ENCODE measurements at regions of chrX and their contacts with region 1.

Region 1: DNA sequence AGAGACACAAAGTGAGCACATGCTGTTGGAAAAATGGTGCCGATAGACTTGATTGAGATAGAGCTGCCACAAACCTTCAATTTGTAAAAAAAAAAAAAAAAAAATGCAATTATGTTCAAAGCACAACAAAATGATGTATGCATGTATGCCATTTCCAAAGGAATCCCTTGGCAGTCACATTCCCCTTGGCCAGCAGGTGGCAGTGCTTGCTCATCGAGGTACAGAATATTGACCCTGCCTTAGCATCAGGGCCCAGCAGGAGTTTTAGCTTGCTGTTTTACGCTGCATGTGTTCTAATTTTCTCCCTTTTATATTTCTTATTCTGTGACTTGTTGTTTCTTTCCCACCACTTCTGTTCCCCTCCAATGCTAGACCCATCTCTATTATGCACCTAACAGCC is 34.5 kb upstream of the CYBB start:
- DNase-seq: peak; percentile 86
- H3K4me3 Mint-ChIP-seq: no peak overlapping the region
- H3K27ac Mint-ChIP-seq: peak overlapping the region; percentile 66
- H3K4me1 Mint-ChIP-seq: peaks cover 15% of the 10 kb centered on the region
- H3K27me3 Mint-ChIP-seq: no peaks in the 10 kb centered on the region

Region 2: DNA sequence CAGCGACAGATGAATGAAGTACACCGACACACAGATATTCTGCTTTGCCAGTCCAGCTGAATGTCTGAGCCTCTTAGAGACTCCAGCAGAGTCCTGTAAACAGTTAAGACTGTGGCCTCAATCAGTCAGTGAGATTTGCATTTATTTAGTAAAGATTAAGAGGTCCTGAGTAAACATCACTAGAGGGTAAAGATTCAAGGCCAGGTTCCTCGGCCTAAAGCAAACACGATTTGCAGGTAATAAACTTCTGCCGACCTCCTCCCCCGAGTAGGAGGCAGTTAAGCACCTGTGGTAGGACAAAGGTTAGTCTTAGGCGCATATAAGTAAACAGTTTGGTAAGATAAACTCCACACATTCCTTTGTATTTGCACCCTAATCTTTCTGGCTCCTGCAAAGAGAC is 1726.2 kb before region 1 on chrX:
- CTCF ChIA-PET with region 1: no interaction called
- intact Hi-C with region 1: no loop called
- DNase-seq: no peak
- H3K4me3 Mint-ChIP-seq: no peak overlapping the region
- H3K27ac Mint-ChIP-seq: no peak overlapping the region
- H3K4me1 Mint-ChIP-seq: no peaks in the 10 kb centered on the region
- H3K27me3 Mint-ChIP-seq: no peaks in the 10 kb centered on the region

Region 3: GRCh38 chrX:37763400-37763799 is 18.0 kb after region 1 on chrX:
- CTCF ChIA-PET with region 1: interaction called, 12 read pairs
- intact Hi-C with region 1: no loop called
- DNase-seq: no peak
- H3K4me3 Mint-ChIP-seq: no peak overlapping the region
- H3K27ac Mint-ChIP-seq: no peak overlapping the region
- H3K4me1 Mint-ChIP-seq: peaks cover 8% of the 10 kb centered on the region
- H3K27me3 Mint-ChIP-seq: no peaks in the 10 kb centered on the region

Region 4: GRCh38 chrX:37787423-37787869 is 42.1 kb after region 1 on chrX:
- CTCF ChIA-PET with region 1: interaction called, 4 read pairs
- intact Hi-C with region 1: loop called (anchors 2 kb)
- DNase-seq: no peak
- H3K4me3 Mint-ChIP-seq: no peak overlapping the region
- H3K27ac Mint-ChIP-seq: no peak overlapping the region
- H3K4me1 Mint-ChIP-seq: peaks cover 21% of the 10 kb centered on the region
- H3K27me3 Mint-ChIP-seq: no peaks in the 10 kb centered on the region

Region 5: GRCh38 chrX:37825209-37825842 is 80.0 kb after region 1 on chrX:
- CTCF ChIA-PET with region 1: interaction called, 123 read pairs
- intact Hi-C with region 1: loop called (anchors 1 kb)
- DNase-seq: peak; percentile 72
- H3K4me3 Mint-ChIP-seq: no peak overlapping the region
- H3K27ac Mint-ChIP-seq: no peak overlapping the region
- H3K4me1 Mint-ChIP-seq: peaks cover 19% of the 10 kb centered on the region
- H3K27me3 Mint-ChIP-seq: no peaks in the 10 kb centered on the region

Region 6: GRCh38 chrX:37905436-37906147 is 160.2 kb after region 1 on chrX:
- CTCF ChIA-PET with region 1: interaction called, 3 read pairs
- intact Hi-C with region 1: loop called (anchors 10 kb)
- DNase-seq: peak; percentile 4
- H3K4me3 Mint-ChIP-seq: peak overlapping the region; percentile 4
- H3K27ac Mint-ChIP-seq: no peak overlapping the region
- H3K4me1 Mint-ChIP-seq: peaks cover 5% of the 10 kb centered on the region
- H3K27me3 Mint-ChIP-seq: peaks cover 11% of the 10 kb centered on the region

Region 7: DNA sequence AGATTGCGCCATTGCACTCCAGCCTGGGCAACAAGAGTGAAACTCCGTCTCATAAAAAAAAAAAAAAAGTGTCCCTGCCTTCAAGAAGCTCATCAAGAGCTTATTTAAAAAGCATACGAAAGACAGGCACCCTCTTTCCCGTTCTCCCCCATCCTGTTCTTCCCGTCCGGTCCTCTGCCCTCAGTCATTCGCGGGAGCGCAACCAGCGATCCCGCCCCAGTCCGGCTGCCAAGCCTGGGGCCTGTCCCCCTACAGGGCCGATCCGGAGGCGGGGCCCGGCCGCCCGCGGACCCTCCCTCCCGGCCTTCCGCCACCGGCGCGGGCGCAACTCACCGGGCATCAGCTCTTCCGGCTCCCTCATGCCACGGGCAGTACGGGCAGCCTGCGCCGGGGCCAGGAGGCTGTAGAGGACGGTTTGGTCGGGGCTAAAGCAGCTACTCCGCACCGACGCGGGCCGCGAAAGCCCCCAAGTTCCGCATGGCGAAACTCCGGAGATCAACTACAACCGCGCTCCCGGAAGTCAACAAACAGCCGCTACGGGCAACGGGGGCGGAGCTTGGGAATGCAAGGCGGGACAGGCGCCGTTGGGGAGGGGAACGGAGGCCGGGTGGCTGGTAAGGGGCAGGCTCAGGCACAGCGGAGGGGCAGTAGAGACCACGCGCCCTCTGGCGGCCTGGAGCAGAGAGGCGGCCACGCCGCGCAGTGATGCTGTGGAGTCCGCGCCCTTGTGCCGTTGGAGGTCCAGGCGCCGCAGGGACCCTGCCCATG is 581.8 kb after region 1 on chrX and contains the start of gene RPGR:
- CTCF ChIA-PET with region 1: no interaction called
- intact Hi-C with region 1: loop called (anchors 2 kb)
- DNase-seq: peak; percentile 93
- H3K4me3 Mint-ChIP-seq: peak within 1 kb of the TSS; percentile 89
- H3K27ac Mint-ChIP-seq: peak within 1 kb of the TSS; percentile 75
- H3K4me1 Mint-ChIP-seq: peaks cover 13% of the 10 kb centered on the region
- H3K27me3 Mint-ChIP-seq: no peaks in the 10 kb centered on the region
- total RNA-seq, gene RPGR: 6.5 to 7.4 TPM